Gastrocnemius medialis (tissue), 4 donors: ENCODE measurements at regions of chr5 and their contacts with region 1.

Region 1: GRCh38 chr5:66987949-66988838 is 208.4 kb downstream of the CD180 start:
- DNase-seq: no peak
- ATAC-seq: peak; percentile 49 to 51
- H3K4me3 ChIP-seq: no peak overlapping the region
- H3K27ac ChIP-seq: no peak overlapping the region
- H3K4me1 ChIP-seq: peaks cover 0 to 4% of the 10 kb centered on the region in 2 donors
- H3K27me3 ChIP-seq: no peaks in the 10 kb centered on the region
- CTCF ChIP-seq: peak; percentile 68 to 87 (median 78)
- POLR2A ChIP-seq: no peak

Region 2: DNA sequence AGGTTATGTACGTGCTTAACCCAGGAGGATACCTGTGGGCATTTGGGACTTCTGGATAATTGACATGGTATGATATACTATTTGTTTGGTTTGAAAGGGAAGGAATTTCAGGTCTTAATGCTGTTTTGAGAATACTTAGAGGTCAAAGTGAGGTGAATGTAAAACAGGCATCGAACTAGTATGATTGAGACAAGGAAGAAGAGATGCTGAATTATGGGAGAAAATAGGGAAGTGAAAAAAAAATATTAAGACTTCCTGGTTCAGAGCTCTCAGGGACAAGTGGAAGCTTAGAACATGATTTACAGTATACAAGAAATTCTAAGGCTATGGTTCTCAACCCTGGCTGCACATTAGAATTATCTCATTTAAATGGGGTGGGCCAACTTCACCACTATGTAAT is 93.1 kb after region 1 on chr5:
- in situ Hi-C with region 1: no loop called
- intact Hi-C with region 1: no loop called
- DNase-seq: no peak
- ATAC-seq: no peak
- H3K4me3 ChIP-seq: no peak overlapping the region
- H3K27ac ChIP-seq: no peak overlapping the region
- H3K4me1 ChIP-seq: peaks cover 0 to 3% of the 10 kb centered on the region in 2 donors
- H3K27me3 ChIP-seq: no peaks in the 10 kb centered on the region
- CTCF ChIP-seq: no peak
- POLR2A ChIP-seq: no peak

Region 3: DNA sequence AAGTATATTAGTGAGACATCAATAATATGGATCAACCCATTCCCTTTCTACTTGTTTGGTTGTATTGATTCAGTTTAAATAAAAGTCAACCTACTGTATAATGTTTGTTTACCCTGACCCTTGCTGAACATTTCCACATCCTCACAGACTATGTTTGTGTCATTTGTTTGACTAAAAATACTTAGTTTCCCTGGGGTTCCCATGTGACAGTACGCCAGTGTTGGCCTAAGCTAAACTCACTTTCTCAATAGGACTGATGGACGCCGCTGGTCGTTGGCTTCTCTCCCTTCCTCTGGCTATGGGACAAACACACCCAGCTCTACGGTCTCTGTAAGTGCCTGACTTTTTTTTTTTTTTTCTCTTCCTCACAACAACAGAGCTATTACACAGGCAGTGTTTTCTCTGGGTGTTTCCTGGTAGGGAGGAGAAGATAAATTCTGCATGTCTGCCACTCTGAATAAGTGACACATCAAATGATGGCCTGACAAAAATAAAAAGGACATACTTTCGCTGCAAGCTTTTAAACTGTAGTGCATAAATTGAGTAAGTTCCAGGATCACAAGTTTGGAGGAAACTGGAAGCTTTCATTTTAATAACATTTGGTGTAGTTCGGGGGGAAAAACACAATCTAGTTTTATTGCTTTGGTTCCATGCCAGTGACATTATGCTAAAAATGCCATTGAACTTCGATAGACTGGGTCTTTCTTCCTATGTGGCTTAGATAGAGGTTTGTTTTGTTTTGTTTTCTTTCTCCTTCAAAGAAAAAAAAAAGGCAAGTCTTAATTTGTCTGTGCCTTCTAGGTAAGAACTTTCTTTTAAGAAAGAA is 107.4 kb after region 1 on chr5:
- in situ Hi-C with region 1: loop called in 1 of 4 experiments (anchors 25 kb)
- intact Hi-C with region 1: loop called (anchors 1 kb)
- DNase-seq: peak; percentile 69 to 89
- ATAC-seq: peak; percentile 93 to 96
- H3K4me3 ChIP-seq: peak overlapping the region in 3 of 4 donors; percentile 0 to 22 (median 15)
- H3K27ac ChIP-seq: peak overlapping the region; percentile 70 to 83 (median 75)
- H3K4me1 ChIP-seq: peaks cover 33 to 41% of the 10 kb centered on the region in 2 donors
- H3K27me3 ChIP-seq: no peaks in the 10 kb centered on the region
- CTCF ChIP-seq: no peak
- POLR2A ChIP-seq: no peak

Region 4: DNA sequence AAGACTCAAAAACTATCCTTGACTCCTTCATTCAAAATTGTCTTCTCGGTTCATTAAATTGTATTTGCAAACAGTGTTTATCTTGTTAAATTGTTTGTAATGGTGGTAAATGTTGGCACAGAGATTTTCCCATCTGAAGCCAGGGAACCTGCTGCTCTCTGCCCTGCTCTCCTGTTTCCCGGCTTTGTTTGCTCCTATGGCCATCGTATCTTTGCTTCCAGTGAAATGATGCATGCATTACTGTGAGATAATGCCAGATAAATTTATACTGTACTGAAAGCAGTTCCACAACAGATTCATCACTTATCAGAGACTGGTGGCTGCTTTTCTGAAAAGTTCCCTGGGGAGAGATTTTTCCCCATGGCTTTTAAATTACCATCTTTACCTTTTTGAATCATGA is 127.1 kb after region 1 on chr5:
- in situ Hi-C with region 1: loop called in 1 of 4 experiments (anchors 25 kb)
- intact Hi-C with region 1: no loop called
- DNase-seq: no peak
- ATAC-seq: no peak
- H3K4me3 ChIP-seq: no peak overlapping the region
- H3K27ac ChIP-seq: no peak overlapping the region
- H3K4me1 ChIP-seq: no peaks in the 10 kb centered on the region
- H3K27me3 ChIP-seq: no peaks in the 10 kb centered on the region
- CTCF ChIP-seq: no peak
- POLR2A ChIP-seq: no peak

Region 5: GRCh38 chr5:67156976-67157583 is 168.9 kb after region 1 on chr5:
- in situ Hi-C with region 1: no loop called
- intact Hi-C with region 1: loop called (anchors 2 kb)
- DNase-seq: no peak
- ATAC-seq: no peak
- H3K4me3 ChIP-seq: no peak overlapping the region
- H3K27ac ChIP-seq: no peak overlapping the region
- H3K4me1 ChIP-seq: peaks cover 17 to 19% of the 10 kb centered on the region in 2 donors
- H3K27me3 ChIP-seq: no peaks in the 10 kb centered on the region
- CTCF ChIP-seq: peak; percentile 66 to 75 (median 69)
- POLR2A ChIP-seq: no peak

Region 6: GRCh38 chr5:67215583-67216471 is 227.6 kb after region 1 on chr5:
- in situ Hi-C with region 1: loop called in 1 of 4 experiments (anchors 10 kb)
- intact Hi-C with region 1: no loop called
- DNase-seq: peak; percentile 64 to 75
- ATAC-seq: peak; percentile 72 to 80
- H3K4me3 ChIP-seq: peak overlapping the region; percentile 26 to 42 (median 26)
- H3K27ac ChIP-seq: peak overlapping the region; percentile 48 to 79 (median 70)
- H3K4me1 ChIP-seq: peaks cover 16 to 19% of the 10 kb centered on the region in 2 donors
- H3K27me3 ChIP-seq: no peaks in the 10 kb centered on the region
- CTCF ChIP-seq: no peak
- POLR2A ChIP-seq: peak in 1 of 2 donors; percentile 21